H1 (cell line): ENCODE measurements at regions of chr5 and their contacts with region 1.

Region 1: DNA sequence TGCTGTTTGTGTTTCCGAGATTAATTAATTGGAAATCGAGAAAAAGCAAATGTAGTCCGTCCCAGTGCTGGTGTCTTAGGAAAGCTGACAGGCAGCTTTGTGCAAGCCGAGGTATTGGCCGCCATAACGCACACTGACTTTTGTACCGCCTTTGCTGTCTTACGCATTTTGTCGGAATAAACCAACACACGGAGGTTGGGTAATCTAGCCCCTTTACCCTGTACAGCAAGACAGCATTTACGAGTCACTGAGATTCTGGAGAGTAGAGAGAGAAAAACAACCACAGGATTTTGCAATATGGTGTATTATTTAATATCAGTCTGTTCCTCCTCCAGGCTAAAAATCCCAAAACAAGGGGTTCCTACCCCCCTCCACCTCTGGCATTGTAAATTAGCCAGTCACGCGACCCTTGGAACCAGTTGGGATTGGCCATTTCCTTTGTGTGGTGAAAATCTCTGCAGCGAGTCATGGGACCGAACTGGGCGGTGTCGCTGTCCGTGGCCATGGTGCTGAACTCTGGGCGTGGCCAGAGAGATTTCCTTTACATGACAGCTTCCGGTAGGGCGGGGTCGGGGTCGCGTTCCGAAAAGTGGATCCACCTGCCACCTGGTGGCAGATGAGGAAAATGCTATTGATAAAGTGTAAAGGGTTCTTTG is 10.3 kb upstream of the PCDHB1 start:
- DNase-seq: peak; percentile 98 to 99
- H3K4me3 ChIP-seq: peak overlapping the region; percentile 71 to 86 (median 74)
- H3K27ac ChIP-seq: peak overlapping the region; percentile 97
- H3K4me1 ChIP-seq: peaks cover 0 to 8% (median 6%) of the 10 kb centered on the region in 4 experiments; a peak in 3 of 7 replicates
- H3K27me3 ChIP-seq: 0 out of 7 replicates have a peak, but pooled peaks cover 0 to 1% (median 0%) of the 10 kb centered on the region in 4 experiments
- CTCF ChIP-seq: peak; percentile 56 to 93 (median 76)
- EP300 ChIP-seq: peak in 1 of 2 experiments; percentile 99; a peak in 2 of 3 replicates
- POLR2A ChIP-seq: peak; percentile 94 to 96
- RAD21 ChIP-seq: peak; percentile 94 to 97

Region 2: GRCh38 chr5:140827704-140828361 is 213.1 kb before region 1 on chr5 and contains the start of gene PCDHA6:
- CTCF ChIA-PET with region 1: interaction called, 10 read pairs
- POLR2A ChIA-PET with region 1: interaction called, 5 read pairs
- DNase-seq: no peak
- H3K4me3 ChIP-seq: peak within 1 kb of the TSS in 1 of 4 experiments; percentile 62; a peak in 2 of 8 replicates
- H3K27ac ChIP-seq: no peak within 1 kb of the TSS
- H3K4me1 ChIP-seq: no peaks in the 10 kb centered on the region
- H3K27me3 ChIP-seq: no peaks in the 10 kb centered on the region
- CTCF ChIP-seq: no peak
- EP300 ChIP-seq: no peak
- POLR2A ChIP-seq: no peak
- RAD21 ChIP-seq: no peak
- total RNA-seq, gene PCDHA6: 6.5 and 7.1 TPM in 2 replicates

Region 3: DNA sequence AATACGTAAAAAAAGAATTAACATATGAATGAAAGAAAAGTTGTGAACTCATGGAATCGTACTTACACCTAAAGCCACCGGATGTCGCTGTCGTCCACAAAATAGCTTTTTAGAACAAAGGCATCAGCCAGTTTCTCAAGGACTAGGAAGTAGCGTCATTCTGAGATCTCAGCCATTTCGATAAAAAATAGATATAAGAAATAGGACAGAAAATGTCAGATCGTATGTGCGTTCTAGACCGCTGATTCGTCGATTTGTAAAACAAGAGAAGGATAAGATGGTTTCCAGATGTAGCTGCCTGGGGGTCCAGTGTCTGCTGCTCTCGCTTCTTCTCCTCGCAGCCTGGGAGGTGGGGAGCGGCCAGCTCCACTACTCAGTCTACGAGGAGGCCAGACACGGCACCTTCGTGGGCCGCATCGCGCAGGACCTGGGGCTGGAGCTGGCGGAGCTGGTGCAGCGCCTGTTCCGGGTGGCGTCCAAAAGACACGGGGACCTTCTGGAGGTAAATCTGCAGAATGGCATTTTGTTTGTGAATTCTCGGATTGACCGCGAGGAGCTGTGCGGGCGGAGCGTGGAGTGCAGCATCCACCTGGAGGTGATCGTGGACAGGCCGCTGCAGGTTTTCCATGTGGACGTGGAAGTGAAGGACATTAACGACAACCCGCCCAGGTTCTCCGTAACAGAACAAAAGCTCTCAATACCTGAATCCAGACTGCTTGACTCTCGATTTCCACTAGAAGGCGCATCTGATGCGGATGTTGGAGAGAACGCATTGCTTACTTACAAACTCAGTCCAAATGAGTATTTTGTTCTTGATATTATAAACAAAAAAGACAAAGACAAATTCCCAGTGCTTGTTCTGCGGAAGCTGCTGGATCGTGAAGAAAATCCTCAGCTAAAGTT is 184.9 kb before region 1 on chr5 and contains the start of gene PCDHA10:
- CTCF ChIA-PET with region 1: interaction called, 14 read pairs
- POLR2A ChIA-PET with region 1: interaction called, 7 read pairs
- DNase-seq: no peak
- H3K4me3 ChIP-seq: peak within 1 kb of the TSS; percentile 67 to 83 (median 72)
- H3K27ac ChIP-seq: no peak within 1 kb of the TSS; the same call in 1 of the 2 replicates
- H3K4me1 ChIP-seq: no peaks in the 10 kb centered on the region
- H3K27me3 ChIP-seq: no peaks in the 10 kb centered on the region
- CTCF ChIP-seq: peak in 2 of 3 experiments; percentile 40 to 47; a peak in 3 of 4 replicates
- EP300 ChIP-seq: no peak
- POLR2A ChIP-seq: no peak
- RAD21 ChIP-seq: peak; percentile 45 to 57; a peak in 3 of 4 replicates
- total RNA-seq, gene PCDHA10: 5.4 and 5.5 TPM in 2 replicates

Region 4: DNA sequence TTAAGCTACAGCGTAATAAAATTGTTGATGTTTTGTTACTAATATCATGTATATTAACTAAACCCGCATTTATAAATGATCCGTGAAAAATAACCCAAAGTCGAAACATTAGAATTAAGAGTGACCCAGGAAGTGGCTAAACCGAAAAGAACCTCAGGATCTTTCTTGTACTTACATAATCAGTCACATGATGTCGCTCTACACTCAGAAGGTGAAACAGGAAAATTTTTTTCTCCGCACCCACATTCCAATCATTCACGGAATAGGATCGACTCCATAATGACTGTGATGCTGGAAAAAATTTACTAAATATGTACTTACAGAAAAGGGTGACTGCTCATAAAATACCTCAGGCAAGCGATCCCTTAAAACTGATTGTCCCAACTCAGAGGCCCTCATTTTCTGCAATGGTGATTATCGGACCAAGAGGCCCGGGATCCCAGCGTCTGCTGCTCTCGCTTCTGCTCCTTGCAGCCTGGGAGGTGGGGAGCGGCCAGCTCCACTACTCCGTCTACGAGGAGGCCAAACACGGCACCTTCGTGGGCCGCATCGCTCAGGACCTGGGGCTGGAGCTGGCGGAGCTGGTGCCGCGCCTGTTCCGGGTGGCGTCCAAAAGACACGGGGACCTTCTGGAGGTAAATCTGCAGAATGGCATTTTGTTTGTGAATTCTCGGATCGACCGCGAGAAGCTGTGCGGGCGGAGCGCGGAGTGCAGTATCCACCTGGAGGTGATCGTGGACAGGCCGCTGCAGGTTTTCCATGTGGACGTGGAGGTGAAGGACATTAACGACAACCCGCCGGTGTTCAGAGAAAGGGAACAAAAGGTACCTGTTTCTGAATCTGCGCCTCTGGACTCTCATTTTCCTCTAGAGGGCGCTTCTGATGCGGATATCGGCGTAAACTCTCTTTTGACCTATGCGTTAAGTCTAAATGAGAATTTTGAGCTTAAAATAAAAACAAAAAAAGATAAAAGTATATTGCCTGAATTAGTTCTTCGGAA is 165.5 kb before region 1 on chr5 and contains the start of gene PCDHA12:
- CTCF ChIA-PET with region 1: interaction called, 141 read pairs
- POLR2A ChIA-PET with region 1: interaction called, 32 read pairs
- DNase-seq: no peak
- H3K4me3 ChIP-seq: peak within 1 kb of the TSS; percentile 55 to 67 (median 65)
- H3K27ac ChIP-seq: no peak within 1 kb of the TSS
- H3K4me1 ChIP-seq: no peaks in the 10 kb centered on the region; a peak in 2 of 7 replicates
- H3K27me3 ChIP-seq: no peaks in the 10 kb centered on the region
- CTCF ChIP-seq: peak in 2 of 3 experiments; percentile 64 to 69; a peak in 3 of 4 replicates
- EP300 ChIP-seq: no peak
- POLR2A ChIP-seq: peak in 1 of 2 experiments; percentile 68; a peak in 2 of 3 replicates
- RAD21 ChIP-seq: peak; percentile 69 to 73
- total RNA-seq, gene PCDHA12: 9.3 and 10.6 TPM in 2 replicates

Region 5: GRCh38 chr5:140916349-140916748 is 124.5 kb before region 1 on chr5:
- CTCF ChIA-PET with region 1: interaction called, 14 read pairs
- POLR2A ChIA-PET with region 1: interaction called, 3 read pairs
- DNase-seq: no peak
- H3K4me3 ChIP-seq: no peak overlapping the region
- H3K27ac ChIP-seq: no peak overlapping the region
- H3K4me1 ChIP-seq: no peaks in the 10 kb centered on the region
- H3K27me3 ChIP-seq: no peaks in the 10 kb centered on the region
- CTCF ChIP-seq: no peak
- EP300 ChIP-seq: no peak
- POLR2A ChIP-seq: no peak
- RAD21 ChIP-seq: no peak

Region 6: GRCh38 chr5:140966293-140967225 is 74.3 kb before region 1 on chr5 and contains the start of gene PCDHAC2:
- CTCF ChIA-PET with region 1: interaction called, 22 read pairs
- POLR2A ChIA-PET with region 1: interaction called, 22 read pairs
- DNase-seq: peak in 1 of 2 experiments; percentile 83
- H3K4me3 ChIP-seq: peak within 1 kb of the TSS; percentile 76 to 96 (median 92)
- H3K27ac ChIP-seq: no peak within 1 kb of the TSS
- H3K4me1 ChIP-seq: peaks cover 2 to 15% (median 7%) of the 10 kb centered on the region in 4 experiments; a peak in 5 of 7 replicates
- H3K27me3 ChIP-seq: peaks cover 2 to 27% (median 20%) of the 10 kb centered on the region in 4 experiments
- CTCF ChIP-seq: 0 out of 4 replicates have a peak, but pooled peaks of 1 of the 3 experiments have one; percentile 9
- EP300 ChIP-seq: peak in 1 of 2 experiments; percentile 44; a peak in 1 of 3 replicates
- POLR2A ChIP-seq: peak in 1 of 2 experiments; percentile 15; a peak in 1 of 3 replicates
- RAD21 ChIP-seq: 0 out of 4 replicates have a peak, but pooled peaks of 1 of the 2 experiments have one; percentile 3
- total RNA-seq, gene PCDHAC2: 3.7 and 4.9 TPM in 2 replicates

Region 7: DNA sequence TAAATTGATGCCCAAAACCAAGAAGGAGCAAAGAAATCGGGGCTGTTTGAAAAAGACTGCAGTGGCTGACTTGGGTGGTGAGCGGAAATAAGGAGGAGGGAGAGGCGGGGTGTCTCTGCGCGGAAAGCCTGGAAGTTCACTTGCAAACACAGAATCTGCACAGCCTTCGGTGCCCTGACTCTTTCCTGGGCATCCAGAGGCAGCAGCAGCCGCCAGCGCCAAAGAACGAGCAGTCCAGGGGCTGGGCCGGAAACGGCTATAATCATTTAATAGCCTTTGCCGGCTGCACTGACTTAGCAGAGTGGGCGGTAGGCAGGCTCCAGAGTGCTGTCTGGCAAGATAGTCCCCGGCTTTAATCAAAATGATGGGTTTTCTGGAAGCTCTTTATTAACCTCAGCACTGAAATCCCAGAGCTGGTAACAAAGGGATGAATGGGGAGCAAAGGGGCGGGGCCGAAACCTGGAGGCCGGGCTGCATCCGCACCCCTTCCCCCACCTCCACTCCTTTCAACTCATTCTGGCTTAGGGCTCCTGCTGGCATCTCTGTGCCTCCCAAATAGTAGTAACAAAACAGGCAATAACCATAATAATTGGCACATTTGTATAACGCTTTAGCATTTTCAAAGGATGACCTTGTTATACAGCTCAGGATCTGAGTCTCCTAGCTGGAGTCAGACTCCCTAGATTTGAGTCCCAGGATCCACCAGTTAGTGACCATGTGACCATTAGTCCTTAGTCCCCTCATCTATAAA is 38.9 kb before region 1 on chr5:
- CTCF ChIA-PET with region 1: interaction called, 18 read pairs
- POLR2A ChIA-PET with region 1: interaction called, 27 read pairs
- DNase-seq: peak; percentile 85 to 88
- H3K4me3 ChIP-seq: peak overlapping the region; percentile 35 to 65 (median 57); a peak in 7 of 8 replicates
- H3K27ac ChIP-seq: peak overlapping the region; percentile 88
- H3K4me1 ChIP-seq: peaks cover 8 to 39% (median 31%) of the 10 kb centered on the region in 4 experiments; a peak in 6 of 7 replicates
- H3K27me3 ChIP-seq: no peaks in the 10 kb centered on the region
- CTCF ChIP-seq: no peak
- EP300 ChIP-seq: peak in 1 of 2 experiments; percentile 96; a peak in 1 of 3 replicates
- POLR2A ChIP-seq: peak in 1 of 2 experiments; percentile 87; a peak in 2 of 3 replicates
- RAD21 ChIP-seq: peak in 1 of 2 experiments; percentile 12; a peak in 1 of 4 replicates

Region 8: GRCh38 chr5:141208478-141208877 is 167.6 kb after region 1 on chr5 and contains the start of gene PCDHB12:
- CTCF ChIA-PET with region 1: no interaction called
- POLR2A ChIA-PET with region 1: no interaction called
- DNase-seq: no peak
- H3K4me3 ChIP-seq: peak within 1 kb of the TSS in 2 of 4 experiments; percentile 10 to 34; a peak in 2 of 8 replicates
- H3K27ac ChIP-seq: no peak within 1 kb of the TSS
- H3K4me1 ChIP-seq: no peaks in the 10 kb centered on the region
- H3K27me3 ChIP-seq: no peaks in the 10 kb centered on the region
- CTCF ChIP-seq: peak in 2 of 3 experiments; percentile 11 to 48; a peak in 3 of 4 replicates
- EP300 ChIP-seq: no peak
- POLR2A ChIP-seq: no peak
- RAD21 ChIP-seq: peak; percentile 42 to 45
- total RNA-seq, gene PCDHB12: 2.0 and 3.0 TPM in 2 replicates